HCT116 (cell line): ENCODE measurements at regions of chr6 and their contacts with region 1.

Region 1: DNA sequence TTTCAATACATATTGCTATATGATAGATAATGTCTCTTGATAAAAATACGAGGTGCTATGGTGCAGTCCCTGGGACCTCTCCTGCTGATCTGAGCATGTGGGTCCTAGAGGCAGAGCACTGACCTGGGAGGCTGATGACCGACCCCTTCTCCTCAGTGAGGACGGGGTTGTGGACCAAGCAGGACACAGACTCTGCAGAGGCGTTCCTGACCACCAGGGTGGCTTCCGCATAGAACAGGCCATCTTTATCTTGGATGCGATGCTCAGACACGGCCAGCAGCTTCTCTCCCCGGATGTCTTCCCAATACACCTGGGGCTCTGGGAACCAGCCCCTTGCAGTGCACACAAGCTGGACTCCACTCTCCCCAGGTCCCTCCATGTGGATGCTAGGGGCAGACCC is 4.2 kb downstream of the BTNL2 start:
- DNase-seq: no peak
- ATAC-seq: 0 out of 2 replicates have a peak, but pooled peaks have one; percentile 22
- H3K4me3 ChIP-seq: no peak overlapping the region
- H3K27ac ChIP-seq: no peak overlapping the region
- H3K4me1 ChIP-seq: no peaks in the 10 kb centered on the region; a peak in 1 of 4 replicates
- H3K27me3 ChIP-seq: no peaks in the 10 kb centered on the region
- CTCF ChIP-seq: no peak
- POLR2A ChIP-seq: no peak
- RAD21 ChIP-seq: no peak

Region 2: GRCh38 chr6:32153564-32154513 is 249.0 kb before region 1 on chr6 and contains the start of gene PPT2:
- CTCF ChIA-PET with region 1: no interaction called
- POLR2A ChIA-PET with region 1: no interaction called
- RAD21 ChIA-PET with region 1: no interaction called
- intact Hi-C with region 1: no loop called
- DNase-seq: peak; percentile 90
- ATAC-seq: peak; percentile 82
- H3K4me3 ChIP-seq: peak within 1 kb of the TSS; percentile 93 to 95
- H3K27ac ChIP-seq: peak within 1 kb of the TSS; percentile 98
- H3K4me1 ChIP-seq: peaks cover 12 to 25% of the 10 kb centered on the region in 2 experiments
- H3K27me3 ChIP-seq: no peaks in the 10 kb centered on the region
- CTCF ChIP-seq: peak in 1 of 3 experiments; percentile 32; a peak in 2 of 6 replicates
- POLR2A ChIP-seq: peak; percentile 18
- RAD21 ChIP-seq: no peak
- total RNA-seq, gene PPT2: 21.0 TPM

Region 3: DNA sequence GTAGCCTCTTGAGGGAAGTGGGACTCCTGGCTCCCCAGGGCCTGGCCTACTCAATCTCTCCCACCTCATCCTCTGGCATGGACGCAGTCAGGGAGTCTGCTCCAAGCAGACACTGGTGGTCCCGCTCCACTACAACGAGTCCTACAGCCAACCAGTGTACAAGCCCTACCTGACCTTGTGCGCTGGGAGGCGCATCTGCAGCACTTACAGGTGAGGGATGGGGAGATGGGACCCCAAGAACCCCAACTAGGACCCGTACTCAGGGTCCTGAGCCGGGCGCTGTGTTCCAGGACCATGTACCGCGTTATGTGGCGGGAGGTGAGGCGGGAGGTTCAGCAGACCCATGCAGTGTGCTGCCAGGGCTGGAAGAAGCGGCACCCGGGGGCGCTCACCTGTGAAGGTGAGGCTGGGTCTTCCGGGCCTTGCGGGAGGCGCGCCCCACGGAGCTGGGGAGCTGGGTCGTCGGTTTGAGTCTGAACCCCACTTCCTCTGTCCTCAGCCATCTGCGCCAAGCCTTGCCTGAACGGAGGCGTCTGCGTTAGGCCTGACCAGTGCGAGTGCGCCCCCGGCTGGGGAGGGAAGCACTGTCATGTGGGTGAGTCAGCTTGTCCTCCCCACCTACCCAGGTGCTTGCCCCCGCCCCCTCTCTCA is 236.3 kb before region 1 on chr6:
- CTCF ChIA-PET with region 1: no interaction called
- POLR2A ChIA-PET with region 1: no interaction called
- RAD21 ChIA-PET with region 1: no interaction called
- intact Hi-C with region 1: no loop called
- DNase-seq: no peak
- ATAC-seq: no peak
- H3K4me3 ChIP-seq: no peak overlapping the region
- H3K27ac ChIP-seq: no peak overlapping the region
- H3K4me1 ChIP-seq: no peaks in the 10 kb centered on the region
- H3K27me3 ChIP-seq: no peaks in the 10 kb centered on the region
- CTCF ChIP-seq: 0 out of 6 replicates have a peak, but pooled peaks of 1 of the 3 experiments have one; percentile 17
- POLR2A ChIP-seq: no peak
- RAD21 ChIP-seq: peak; percentile 26; the same call in 1 of the 2 replicates

Region 4: GRCh38 chr6:32413427-32414047 is 10.7 kb after region 1 on chr6:
- CTCF ChIA-PET with region 1: interaction called, 11 read pairs
- POLR2A ChIA-PET with region 1: no interaction called
- RAD21 ChIA-PET with region 1: no interaction called
- intact Hi-C with region 1: no loop called
- DNase-seq: peak; percentile 69
- ATAC-seq: peak; percentile 85
- H3K4me3 ChIP-seq: no peak overlapping the region; a peak in 1 of 4 replicates
- H3K27ac ChIP-seq: no peak overlapping the region
- H3K4me1 ChIP-seq: peaks cover 0 to 12% of the 10 kb centered on the region in 2 experiments; a peak in 2 of 4 replicates
- H3K27me3 ChIP-seq: no peaks in the 10 kb centered on the region
- CTCF ChIP-seq: peak; percentile 73 to 91 (median 88)
- POLR2A ChIP-seq: no peak
- RAD21 ChIP-seq: peak; percentile 89